ENCODE measurements at regions of chr1 and their contacts with region 1.

Region 1: GRCh38 chr1:101262630-101263348 is 26.0 kb downstream of the S1PR1 start:
- DNase-seq: peak; percentile 83
- H3K4me3 Mint-ChIP-seq: peak overlapping the region; percentile 52
- H3K27ac Mint-ChIP-seq: peak overlapping the region; percentile 17
- H3K4me1 Mint-ChIP-seq: peaks cover 61% of the 10 kb centered on the region
- H3K27me3 Mint-ChIP-seq: no peaks in the 10 kb centered on the region

Region 2: DNA sequence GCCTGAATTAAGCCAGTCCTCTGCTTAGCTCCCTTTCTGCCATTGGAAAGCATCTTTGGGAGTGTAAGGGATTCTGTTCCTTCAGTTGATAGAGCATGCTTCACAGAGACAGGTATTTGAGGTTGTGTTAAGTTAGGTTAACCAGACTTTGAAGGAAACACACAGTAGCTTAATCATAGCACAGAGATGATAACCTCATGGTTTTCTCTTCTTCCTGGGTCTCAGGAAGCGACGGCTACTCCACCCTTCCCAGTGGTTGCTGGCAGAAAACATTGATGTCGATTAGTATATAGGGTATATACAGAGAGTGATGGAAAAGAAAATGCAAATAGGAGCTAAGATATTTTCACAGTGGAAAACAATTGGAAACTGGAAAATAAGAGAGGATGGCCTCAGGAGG is 16.1 kb after region 1 on chr1:
- intact Hi-C with region 1: loop called (anchors 2 kb)
- DNase-seq: peak; percentile 75
- H3K4me3 Mint-ChIP-seq: peak overlapping the region; percentile 58
- H3K27ac Mint-ChIP-seq: peak overlapping the region; percentile 54
- H3K4me1 Mint-ChIP-seq: peaks cover 58% of the 10 kb centered on the region
- H3K27me3 Mint-ChIP-seq: no peaks in the 10 kb centered on the region